Endothelial cell of umbilical vein (primary cell): ENCODE measurements at regions of chr2 and their contacts with region 1.

Region 1: DNA sequence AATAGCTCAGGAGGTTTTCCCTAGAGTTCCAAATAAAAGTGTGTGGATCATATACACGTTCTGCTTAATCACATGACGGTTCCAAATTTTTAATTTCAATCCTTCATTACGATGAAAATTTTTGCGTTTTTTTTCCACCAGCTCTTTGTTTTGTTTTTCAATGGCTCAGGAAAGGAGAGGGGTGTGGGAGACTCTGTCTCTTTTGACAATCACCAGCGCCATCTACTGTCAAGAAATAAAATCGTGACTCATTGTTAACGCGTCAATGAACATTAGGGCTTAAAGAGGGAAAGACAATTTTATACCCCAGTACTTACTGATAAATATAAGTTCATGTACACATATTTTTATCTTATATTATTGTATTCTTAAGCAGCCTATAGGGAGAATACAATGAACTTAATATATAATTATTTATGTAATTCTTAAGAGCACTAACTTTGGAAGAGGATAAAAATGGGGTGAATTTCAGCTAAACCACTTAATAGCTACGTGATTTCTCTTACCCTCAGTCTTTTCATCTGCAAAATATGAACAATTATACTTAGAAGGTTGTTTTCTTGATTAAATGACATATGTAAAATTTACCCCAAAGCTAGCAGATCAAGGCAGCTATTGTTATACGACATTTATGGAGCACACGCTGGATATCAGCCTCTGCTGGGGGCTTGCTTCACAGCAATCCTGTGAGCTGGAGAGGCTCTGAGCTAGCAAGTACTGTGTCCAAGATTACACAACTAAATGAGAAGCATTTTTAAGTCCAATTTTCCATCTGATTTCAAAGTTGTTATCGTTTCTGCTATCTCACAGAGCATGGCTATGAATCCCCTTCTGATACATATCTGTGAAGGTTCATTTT is 47.4 kb upstream of the RMDN2 start:
- DNase-seq: peak; percentile 73
- H3K4me3 ChIP-seq: no peak overlapping the region
- H3K27ac ChIP-seq: no peak overlapping the region
- H3K4me1 ChIP-seq: peaks cover 3% of the 10 kb centered on the region
- H3K27me3 ChIP-seq: no peaks in the 10 kb centered on the region
- CTCF ChIP-seq: peak; percentile 31 to 39
- POLR2A ChIP-seq: no peak

Region 2: DNA sequence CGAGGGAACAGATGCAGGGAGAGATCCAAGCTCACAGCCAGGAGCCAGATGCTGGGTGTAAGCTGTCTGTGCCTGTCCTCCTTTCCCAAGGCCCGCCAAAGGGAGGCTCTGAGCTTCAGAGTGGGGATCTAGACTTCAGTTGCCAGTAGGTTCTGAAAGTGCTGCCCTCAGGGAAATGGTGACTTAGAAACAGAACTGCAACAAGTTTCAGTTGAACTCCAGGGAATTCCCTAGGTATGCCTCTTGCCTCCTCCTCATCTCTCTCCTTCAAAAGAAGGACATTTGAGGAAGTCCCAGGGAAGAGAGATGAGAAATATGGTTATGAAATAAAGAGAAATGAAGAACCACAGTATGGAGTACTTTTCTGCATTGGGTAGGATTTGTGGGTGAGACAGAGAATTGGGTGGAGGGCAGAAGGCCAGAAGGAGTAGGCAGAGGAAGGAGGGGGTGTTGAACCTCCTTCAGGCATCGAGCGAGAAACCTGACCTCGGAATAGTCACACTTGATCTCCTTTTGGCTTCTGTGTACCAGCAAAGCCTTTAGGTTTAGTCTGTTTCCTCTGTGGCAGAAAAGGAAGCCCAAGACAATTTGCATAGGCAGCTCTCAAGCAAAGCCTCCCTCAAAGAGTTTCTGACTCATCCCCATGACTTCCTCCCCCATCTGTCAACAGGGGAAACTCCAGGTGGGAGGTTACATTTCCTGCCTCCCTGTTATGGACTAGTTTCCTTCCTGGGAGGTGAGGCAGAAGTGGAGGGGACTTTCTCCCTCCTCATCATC is 487.5 kb before region 1 on chr2:
- CTCF ChIA-PET with region 1: interaction called, 399 read pairs
- POLR2A ChIA-PET with region 1: no interaction called
- dilution Hi-C with region 1: no loop called
- intact Hi-C with region 1: no loop called
- DNase-seq: peak; percentile 88
- H3K4me3 ChIP-seq: no peak overlapping the region
- H3K27ac ChIP-seq: peak overlapping the region; percentile 78
- H3K4me1 ChIP-seq: peaks cover 28% of the 10 kb centered on the region
- H3K27me3 ChIP-seq: no peaks in the 10 kb centered on the region
- CTCF ChIP-seq: no peak
- POLR2A ChIP-seq: peak; percentile 82

Region 3: DNA sequence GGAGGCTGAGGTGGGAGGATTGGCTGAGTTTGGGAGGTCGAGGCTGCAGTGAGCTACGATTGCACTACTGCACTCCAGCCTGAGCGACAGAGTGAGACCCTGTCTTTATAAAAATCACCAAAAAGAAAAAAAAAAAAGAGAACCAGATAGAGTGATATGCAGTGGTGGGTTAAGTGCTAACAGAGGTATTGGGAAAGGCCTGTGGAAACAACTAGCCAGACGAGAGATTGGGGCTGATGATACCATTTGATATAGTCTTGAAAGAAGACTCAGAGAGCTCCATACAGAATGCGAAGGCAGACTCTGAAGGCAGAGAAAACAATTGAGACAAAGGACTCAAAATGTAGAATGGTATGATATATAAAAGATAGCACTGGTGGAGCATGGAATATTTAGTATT is 340.4 kb before region 1 on chr2:
- CTCF ChIA-PET with region 1: interaction called, 16 read pairs
- POLR2A ChIA-PET with region 1: no interaction called
- dilution Hi-C with region 1: no loop called
- intact Hi-C with region 1: loop called (anchors 5 kb)
- DNase-seq: no peak
- H3K4me3 ChIP-seq: no peak overlapping the region
- H3K27ac ChIP-seq: no peak overlapping the region
- H3K4me1 ChIP-seq: no peaks in the 10 kb centered on the region
- H3K27me3 ChIP-seq: no peaks in the 10 kb centered on the region
- CTCF ChIP-seq: no peak
- POLR2A ChIP-seq: no peak

Region 4: GRCh38 chr2:37653805-37654378 is 223.8 kb before region 1 on chr2:
- CTCF ChIA-PET with region 1: interaction called, 18 read pairs
- POLR2A ChIA-PET with region 1: no interaction called
- dilution Hi-C with region 1: no loop called
- intact Hi-C with region 1: loop called (anchors 5 kb)
- DNase-seq: no peak
- H3K4me3 ChIP-seq: no peak overlapping the region
- H3K27ac ChIP-seq: peak overlapping the region; percentile 97
- H3K4me1 ChIP-seq: peaks cover 79% of the 10 kb centered on the region
- H3K27me3 ChIP-seq: no peaks in the 10 kb centered on the region
- CTCF ChIP-seq: no peak
- POLR2A ChIP-seq: peak; percentile 6

Region 5: DNA sequence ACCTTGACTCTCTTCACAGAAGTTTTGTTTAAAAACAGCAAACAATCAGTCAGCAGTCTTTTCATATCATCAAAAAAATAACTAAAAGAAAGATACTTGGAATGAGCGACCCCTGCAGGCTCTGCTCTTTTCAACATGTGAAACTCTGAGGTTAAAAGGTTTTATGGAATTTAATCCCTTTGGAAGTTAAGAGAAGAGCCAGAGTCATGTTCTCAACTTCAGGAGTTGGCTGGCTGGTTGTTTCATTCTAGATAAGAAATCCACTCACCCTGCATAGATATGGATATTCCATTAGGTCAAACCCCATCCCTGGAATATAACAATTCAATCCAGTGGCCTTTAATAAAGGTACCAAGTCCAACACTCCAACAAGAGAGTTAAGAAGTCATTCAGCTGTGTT is 68.2 kb before region 1 on chr2:
- CTCF ChIA-PET with region 1: interaction called, 26 read pairs
- POLR2A ChIA-PET with region 1: no interaction called
- dilution Hi-C with region 1: no loop called
- intact Hi-C with region 1: no loop called
- DNase-seq: peak; percentile 77
- H3K4me3 ChIP-seq: no peak overlapping the region
- H3K27ac ChIP-seq: no peak overlapping the region
- H3K4me1 ChIP-seq: peaks cover 13% of the 10 kb centered on the region
- H3K27me3 ChIP-seq: no peaks in the 10 kb centered on the region
- CTCF ChIP-seq: peak; percentile 42 to 45
- POLR2A ChIP-seq: no peak

Region 6: GRCh38 chr2:37865640-37866039 is 12.0 kb before region 1 on chr2:
- CTCF ChIA-PET with region 1: interaction called, 21 read pairs
- POLR2A ChIA-PET with region 1: no interaction called
- dilution Hi-C with region 1: no loop called
- intact Hi-C with region 1: no loop called
- DNase-seq: no peak
- H3K4me3 ChIP-seq: no peak overlapping the region
- H3K27ac ChIP-seq: no peak overlapping the region
- H3K4me1 ChIP-seq: no peaks in the 10 kb centered on the region
- H3K27me3 ChIP-seq: no peaks in the 10 kb centered on the region
- CTCF ChIP-seq: no peak
- POLR2A ChIP-seq: no peak

Region 7: GRCh38 chr2:37914340-37914739 is 36.7 kb after region 1 on chr2:
- CTCF ChIA-PET with region 1: no interaction called
- POLR2A ChIA-PET with region 1: no interaction called
- dilution Hi-C with region 1: no loop called
- intact Hi-C with region 1: no loop called
- DNase-seq: no peak
- H3K4me3 ChIP-seq: no peak overlapping the region
- H3K27ac ChIP-seq: no peak overlapping the region
- H3K4me1 ChIP-seq: no peaks in the 10 kb centered on the region
- H3K27me3 ChIP-seq: peaks cover 5 to 7% of the 10 kb centered on the region in 2 experiments
- CTCF ChIP-seq: no peak
- POLR2A ChIP-seq: no peak

Region 8: GRCh38 chr2:37993143-37993542 is 115.5 kb after region 1 on chr2:
- CTCF ChIA-PET with region 1: no interaction called
- POLR2A ChIA-PET with region 1: no interaction called
- dilution Hi-C with region 1: no loop called
- intact Hi-C with region 1: no loop called
- DNase-seq: no peak
- H3K4me3 ChIP-seq: no peak overlapping the region
- H3K27ac ChIP-seq: no peak overlapping the region
- H3K4me1 ChIP-seq: no peaks in the 10 kb centered on the region
- H3K27me3 ChIP-seq: no peaks in the 10 kb centered on the region
- CTCF ChIP-seq: no peak
- POLR2A ChIP-seq: no peak